ENCODE measurements at regions of chr2 and their contacts with region 1.

Region 1: GRCh38 chr2:196171248-196171871 is at the start of gene STK17B:
- DNase-seq: peak; percentile 96 to 99 (median 98)
- ATAC-seq: peak; percentile 57
- H3K4me3 ChIP-seq: peak within 1 kb of the TSS; percentile 91
- H3K4me3 Mint-ChIP-seq: peak within 1 kb of the TSS; percentile 99
- H3K27ac ChIP-seq: peak within 1 kb of the TSS; percentile 76 to 99
- H3K27ac Mint-ChIP-seq: peak within 1 kb of the TSS; percentile 85
- H3K4me1 ChIP-seq: peaks cover 40% of the 10 kb centered on the region
- H3K4me1 Mint-ChIP-seq: peaks cover 44% of the 10 kb centered on the region
- H3K27me3 ChIP-seq: no peaks in the 10 kb centered on the region
- H3K27me3 Mint-ChIP-seq: peaks cover 8% of the 10 kb centered on the region
- CTCF ChIP-seq: no peak
- total RNA-seq, gene STK17B: 645 to 648 TPM

Region 2: GRCh38 chr2:195533771-195534642 is 637.4 kb before region 1 on chr2:
- CTCF ChIA-PET with region 1: no interaction called
- POLR2A ChIA-PET with region 1: no interaction called
- intact Hi-C with region 1: loop called in 1 of 2 experiments (anchors 10 kb)
- DNase-seq: peak in 13 of 14 experiments; percentile 36 to 78 (median 55)
- ATAC-seq: peak; percentile 72
- H3K4me3 ChIP-seq: peak overlapping the region; percentile 54
- H3K4me3 Mint-ChIP-seq: peak overlapping the region; percentile 90
- H3K27ac ChIP-seq: peak overlapping the region; percentile 52 to 79
- H3K27ac Mint-ChIP-seq: peak overlapping the region; percentile 100
- H3K4me1 ChIP-seq: peaks cover 52% of the 10 kb centered on the region
- H3K4me1 Mint-ChIP-seq: peaks cover 86% of the 10 kb centered on the region
- H3K27me3 ChIP-seq: no peaks in the 10 kb centered on the region
- H3K27me3 Mint-ChIP-seq: no peaks in the 10 kb centered on the region
- CTCF ChIP-seq: no peak

Region 3: GRCh38 chr2:196137271-196137670 is 34.1 kb before region 1 on chr2:
- CTCF ChIA-PET with region 1: no interaction called
- POLR2A ChIA-PET with region 1: interaction called, 82 read pairs
- intact Hi-C with region 1: loop called in 1 of 2 experiments (anchors 5 kb)
- DNase-seq: no peak
- ATAC-seq: no peak
- H3K4me3 ChIP-seq: no peak overlapping the region
- H3K4me3 Mint-ChIP-seq: peak overlapping the region; percentile 1
- H3K27ac ChIP-seq: no peak overlapping the region
- H3K27ac Mint-ChIP-seq: peak overlapping the region; percentile 76
- H3K4me1 ChIP-seq: peaks cover 9% of the 10 kb centered on the region
- H3K4me1 Mint-ChIP-seq: peaks cover 58% of the 10 kb centered on the region
- H3K27me3 ChIP-seq: no peaks in the 10 kb centered on the region
- H3K27me3 Mint-ChIP-seq: no peaks in the 10 kb centered on the region
- CTCF ChIP-seq: no peak

Region 4: DNA sequence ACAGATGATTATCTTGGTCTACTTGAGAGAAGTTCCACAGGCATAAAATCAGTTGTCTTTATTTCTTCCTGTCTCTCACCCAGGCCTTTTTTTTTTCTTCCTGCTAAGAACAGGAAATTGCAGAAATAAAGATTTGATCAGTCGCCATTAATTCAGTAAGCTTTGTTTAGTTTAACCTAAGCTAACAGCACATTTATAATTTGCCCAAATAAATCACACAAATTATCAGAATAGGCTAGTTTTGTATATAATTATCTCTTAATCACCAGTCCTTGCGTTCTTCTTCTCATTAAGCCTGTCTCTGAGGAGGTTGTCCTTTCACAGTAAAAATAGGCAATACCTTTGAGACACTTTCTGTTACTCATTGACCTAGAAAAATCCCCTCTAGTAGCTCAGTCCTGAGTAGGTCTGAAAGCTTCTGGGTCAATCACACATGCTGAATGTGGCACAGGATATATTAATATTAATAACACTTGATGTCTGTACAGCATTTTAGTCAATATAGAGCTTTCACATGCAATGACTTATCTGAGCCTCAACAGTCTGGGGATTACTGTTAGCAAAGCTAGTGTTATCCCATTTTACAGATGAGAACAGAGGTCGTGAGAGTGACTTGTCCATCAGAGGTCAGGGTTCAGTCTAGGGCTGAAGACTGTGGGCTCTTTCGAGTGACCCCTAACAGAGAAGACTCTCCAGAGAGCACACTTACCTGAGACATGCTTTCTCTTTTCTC is 11.2 kb after region 1 on chr2:
- CTCF ChIA-PET with region 1: interaction called, 4 read pairs
- POLR2A ChIA-PET with region 1: interaction called, 70 read pairs
- intact Hi-C with region 1: loop called in 1 of 2 experiments (anchors 1 kb)
- DNase-seq: peak in 2 of 14 experiments; percentile 60 to 74
- ATAC-seq: no peak
- H3K4me3 ChIP-seq: no peak overlapping the region
- H3K4me3 Mint-ChIP-seq: peak overlapping the region; percentile 76
- H3K27ac ChIP-seq: peak overlapping the region; percentile 68 to 79
- H3K27ac Mint-ChIP-seq: peak overlapping the region; percentile 94
- H3K4me1 ChIP-seq: peaks cover 76% of the 10 kb centered on the region
- H3K4me1 Mint-ChIP-seq: peaks cover 94% of the 10 kb centered on the region
- H3K27me3 ChIP-seq: no peaks in the 10 kb centered on the region
- H3K27me3 Mint-ChIP-seq: no peaks in the 10 kb centered on the region
- CTCF ChIP-seq: no peak

Region 5: DNA sequence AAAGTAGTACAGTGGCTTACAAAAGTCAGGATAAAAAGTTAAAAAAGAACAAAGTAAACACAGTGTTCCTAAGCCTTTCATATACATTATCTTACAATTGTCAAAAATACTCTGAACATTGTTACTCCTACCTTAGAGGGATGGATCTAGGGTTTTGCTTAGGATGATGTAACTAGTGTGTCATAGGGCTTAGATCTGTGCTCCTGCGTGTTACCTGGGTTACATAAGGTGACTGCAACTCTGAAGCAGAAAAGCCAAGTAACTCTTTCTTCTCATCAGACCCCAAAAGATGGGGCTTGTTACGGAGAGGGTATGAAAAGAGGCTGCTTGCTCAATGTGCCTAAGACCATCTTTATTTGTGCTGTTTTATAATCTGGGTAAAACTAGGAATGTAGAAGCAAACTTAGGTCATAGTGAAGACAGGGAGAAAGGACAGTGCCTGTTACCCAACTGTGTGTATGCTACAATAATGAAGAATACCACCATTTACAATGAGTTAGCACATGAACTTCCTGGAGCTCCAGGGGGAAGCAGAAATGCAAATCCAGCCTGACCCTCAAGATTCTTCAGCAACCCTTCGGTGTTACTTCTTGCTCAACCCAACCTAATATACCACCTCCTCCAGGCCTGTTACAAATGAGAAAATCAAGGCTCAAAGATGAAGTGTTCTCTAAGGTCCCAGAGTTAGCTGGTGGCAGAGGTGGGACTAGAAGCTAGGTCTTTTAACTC is 42.1 kb after region 1 on chr2:
- CTCF ChIA-PET with region 1: interaction called, 6 read pairs
- POLR2A ChIA-PET with region 1: interaction called, 75 read pairs
- intact Hi-C with region 1: loop called in 1 of 2 experiments (anchors 1 kb)
- DNase-seq: peak in 2 of 14 experiments; percentile 66 to 73
- ATAC-seq: no peak
- H3K4me3 ChIP-seq: no peak overlapping the region
- H3K4me3 Mint-ChIP-seq: peak overlapping the region; percentile 26
- H3K27ac ChIP-seq: peak overlapping the region; percentile 6 to 15
- H3K27ac Mint-ChIP-seq: peak overlapping the region; percentile 95
- H3K4me1 ChIP-seq: peaks cover 45% of the 10 kb centered on the region
- H3K4me1 Mint-ChIP-seq: peaks cover 88% of the 10 kb centered on the region
- H3K27me3 ChIP-seq: no peaks in the 10 kb centered on the region
- H3K27me3 Mint-ChIP-seq: no peaks in the 10 kb centered on the region
- CTCF ChIP-seq: no peak

Region 6: DNA sequence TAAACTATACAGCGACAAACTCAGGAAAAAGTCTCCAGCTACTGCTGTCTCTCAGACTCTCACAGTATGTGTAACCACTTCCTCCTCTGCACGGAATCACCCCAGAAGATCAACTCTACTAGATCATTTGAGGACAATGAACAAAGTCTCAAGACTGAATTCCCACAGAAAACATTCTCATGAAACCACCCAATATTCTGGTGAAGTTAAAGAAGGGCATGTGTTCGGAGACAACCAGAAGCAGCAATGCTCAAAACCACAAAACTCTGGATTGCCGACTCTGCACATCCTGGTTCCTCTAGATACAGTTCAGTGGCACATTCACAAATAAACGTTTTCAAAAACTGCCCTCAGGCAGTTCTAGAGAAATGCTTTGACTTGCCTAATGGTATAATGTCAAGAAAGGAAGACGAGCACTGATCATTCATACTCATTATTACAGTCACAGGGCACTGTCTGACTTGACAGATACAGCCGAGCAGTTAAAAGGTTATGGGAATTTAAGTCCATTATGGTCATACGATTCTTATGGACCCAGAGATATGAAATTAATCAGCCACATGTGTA is 91.9 kb after region 1 on chr2:
- CTCF ChIA-PET with region 1: interaction called, 6 read pairs
- POLR2A ChIA-PET with region 1: interaction called, 79 read pairs
- intact Hi-C with region 1: loop called in 1 of 2 experiments (anchors 2 kb)
- DNase-seq: peak in 11 of 14 experiments; percentile 14 to 87 (median 42)
- ATAC-seq: peak; percentile 79
- H3K4me3 ChIP-seq: peak overlapping the region; percentile 28
- H3K4me3 Mint-ChIP-seq: peak overlapping the region; percentile 43
- H3K27ac ChIP-seq: peak overlapping the region; percentile 79 to 85
- H3K27ac Mint-ChIP-seq: peak overlapping the region; percentile 84
- H3K4me1 ChIP-seq: peaks cover 48% of the 10 kb centered on the region
- H3K4me1 Mint-ChIP-seq: peaks cover 88% of the 10 kb centered on the region
- H3K27me3 ChIP-seq: no peaks in the 10 kb centered on the region
- H3K27me3 Mint-ChIP-seq: no peaks in the 10 kb centered on the region
- CTCF ChIP-seq: no peak

Region 7: GRCh38 chr2:196652869-196653268 is 481.5 kb after region 1 on chr2:
- CTCF ChIA-PET with region 1: no interaction called
- POLR2A ChIA-PET with region 1: no interaction called
- intact Hi-C with region 1: no loop called
- DNase-seq: no peak
- ATAC-seq: no peak
- H3K4me3 ChIP-seq: no peak overlapping the region
- H3K4me3 Mint-ChIP-seq: no peak overlapping the region
- H3K27ac ChIP-seq: no peak overlapping the region
- H3K27ac Mint-ChIP-seq: no peak overlapping the region
- H3K4me1 ChIP-seq: no peaks in the 10 kb centered on the region
- H3K4me1 Mint-ChIP-seq: no peaks in the 10 kb centered on the region
- H3K27me3 ChIP-seq: no peaks in the 10 kb centered on the region
- H3K27me3 Mint-ChIP-seq: no peaks in the 10 kb centered on the region
- CTCF ChIP-seq: no peak

Region 8: DNA sequence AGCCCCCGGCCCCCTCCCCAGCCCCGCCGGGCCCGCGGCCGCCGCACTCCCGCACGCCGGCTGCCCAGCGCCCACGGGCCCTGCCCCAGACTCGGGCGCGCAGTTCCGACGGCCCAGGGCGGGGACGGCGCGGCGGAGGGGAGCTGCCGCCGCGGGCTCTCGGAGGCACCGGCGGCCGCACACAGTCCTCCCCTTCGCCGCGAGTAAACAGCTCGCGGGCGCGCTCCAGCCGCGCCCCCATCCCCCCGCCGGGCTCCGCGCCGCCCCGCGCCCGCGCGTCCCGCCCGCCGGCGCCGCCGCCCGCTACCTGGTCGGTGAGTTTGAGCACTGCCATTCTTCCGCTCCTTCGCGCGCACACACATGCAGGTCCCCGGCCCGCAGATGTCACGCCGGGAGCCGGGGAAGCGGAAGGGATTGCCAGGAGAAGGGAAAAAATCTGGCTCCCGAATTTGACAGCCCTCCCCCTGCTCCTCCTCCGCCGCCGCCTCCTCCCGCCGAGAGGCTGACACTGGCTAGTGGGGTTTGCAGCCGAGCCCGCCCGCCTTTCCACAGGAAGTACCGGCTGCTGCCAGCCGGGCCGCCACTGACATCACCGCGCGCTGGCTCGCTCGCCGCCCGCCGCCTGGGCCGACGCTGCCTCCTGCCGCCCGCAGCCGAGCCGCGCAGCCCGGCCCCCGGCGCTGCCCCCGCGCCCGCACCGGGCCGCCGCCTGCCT is 1139.1 kb after region 1 on chr2 and contains the start of gene ANKRD44:
- CTCF ChIA-PET with region 1: no interaction called
- POLR2A ChIA-PET with region 1: interaction called, 3 read pairs
- intact Hi-C with region 1: loop called in 1 of 2 experiments (anchors 10 kb)
- DNase-seq: peak; percentile 81 to 96 (median 86)
- ATAC-seq: peak; percentile 77
- H3K4me3 ChIP-seq: peak within 1 kb of the TSS; percentile 94
- H3K4me3 Mint-ChIP-seq: peak within 1 kb of the TSS; percentile 95
- H3K27ac ChIP-seq: peak within 1 kb of the TSS; percentile 85 to 96
- H3K27ac Mint-ChIP-seq: peak within 1 kb of the TSS; percentile 95
- H3K4me1 ChIP-seq: peaks cover 46% of the 10 kb centered on the region
- H3K4me1 Mint-ChIP-seq: peaks cover 69% of the 10 kb centered on the region
- H3K27me3 ChIP-seq: no peaks in the 10 kb centered on the region
- H3K27me3 Mint-ChIP-seq: no peaks in the 10 kb centered on the region
- CTCF ChIP-seq: no peak
- total RNA-seq, gene ANKRD44: 170 to 186 TPM

Measured in CD4-positive, alpha-beta T cell (primary cell).